Mammary epithelial cell (primary cell): ENCODE measurements at regions of chr22 and their contacts with region 1.

Region 1: DNA sequence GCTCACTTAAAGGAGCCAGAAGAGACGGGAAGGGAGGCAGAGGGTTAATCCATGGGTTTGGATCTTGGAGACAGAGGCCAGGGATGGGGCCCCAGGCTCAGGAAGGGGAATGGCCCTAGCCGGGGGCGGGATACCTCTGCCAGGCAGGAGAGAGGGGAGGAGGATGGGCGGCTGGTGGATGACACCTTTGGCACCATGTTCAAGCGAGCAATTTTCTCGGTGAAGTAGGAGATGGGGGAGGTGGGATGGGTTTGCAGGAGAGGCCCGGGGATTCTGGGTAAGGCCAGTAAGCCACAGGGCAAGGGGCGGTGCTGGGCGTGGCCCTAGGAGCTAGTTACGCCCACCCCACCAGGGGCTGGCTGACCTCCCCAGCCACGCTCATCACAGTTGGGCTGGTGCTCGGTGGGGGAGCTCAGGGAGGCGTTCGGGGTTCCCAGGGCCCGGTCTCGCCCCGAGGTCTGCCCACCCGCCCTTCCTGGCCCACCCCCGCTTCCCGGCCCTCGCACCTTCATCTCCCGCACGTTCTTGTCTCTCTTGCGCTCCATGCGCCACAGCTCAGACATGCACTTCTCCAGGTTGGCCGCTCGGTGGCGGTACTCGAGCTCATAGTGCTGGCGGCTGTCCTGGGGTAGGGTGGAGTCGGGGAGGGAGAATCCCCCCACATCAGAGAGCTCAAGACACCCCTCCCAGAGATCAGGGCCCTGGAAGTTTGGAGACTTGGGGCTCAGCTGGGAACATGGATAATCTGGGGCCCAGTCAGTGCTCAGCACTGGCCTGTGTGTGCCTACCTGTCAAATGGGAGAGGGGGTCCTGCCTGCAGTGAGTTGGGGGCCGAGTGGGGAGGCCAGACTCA is 12.7 kb downstream of the BAIAP2L2 start:
- DNase-seq: no peak
- H3K4me3 ChIP-seq: no peak overlapping the region
- H3K27ac ChIP-seq: no peak overlapping the region
- H3K4me1 ChIP-seq: no peaks in the 10 kb centered on the region
- H3K27me3 ChIP-seq: no peaks in the 10 kb centered on the region
- CTCF ChIP-seq: peak; percentile 4 to 26

Region 2: GRCh38 chr22:37633625-37634416 is 464.0 kb before region 1 on chr22:
- CTCF ChIA-PET with region 1: no interaction called
- dilution Hi-C with region 1: no loop called
- in situ Hi-C with region 1: no loop called
- intact Hi-C with region 1: no loop called
- DNase-seq: no peak
- H3K4me3 ChIP-seq: no peak overlapping the region
- H3K27ac ChIP-seq: no peak overlapping the region
- H3K4me1 ChIP-seq: peaks cover 11% of the 10 kb centered on the region
- H3K27me3 ChIP-seq: no peaks in the 10 kb centered on the region
- CTCF ChIP-seq: no peak

Region 3: GRCh38 chr22:38051900-38052862 is 45.6 kb before region 1 on chr22:
- CTCF ChIA-PET with region 1: no interaction called
- dilution Hi-C with region 1: no loop called
- in situ Hi-C with region 1: no loop called
- intact Hi-C with region 1: no loop called
- DNase-seq: peak; percentile 50
- H3K4me3 ChIP-seq: no peak overlapping the region
- H3K27ac ChIP-seq: no peak overlapping the region
- H3K4me1 ChIP-seq: peaks cover 6% of the 10 kb centered on the region
- H3K27me3 ChIP-seq: no peaks in the 10 kb centered on the region
- CTCF ChIP-seq: peak; percentile 73 to 83

Region 4: DNA sequence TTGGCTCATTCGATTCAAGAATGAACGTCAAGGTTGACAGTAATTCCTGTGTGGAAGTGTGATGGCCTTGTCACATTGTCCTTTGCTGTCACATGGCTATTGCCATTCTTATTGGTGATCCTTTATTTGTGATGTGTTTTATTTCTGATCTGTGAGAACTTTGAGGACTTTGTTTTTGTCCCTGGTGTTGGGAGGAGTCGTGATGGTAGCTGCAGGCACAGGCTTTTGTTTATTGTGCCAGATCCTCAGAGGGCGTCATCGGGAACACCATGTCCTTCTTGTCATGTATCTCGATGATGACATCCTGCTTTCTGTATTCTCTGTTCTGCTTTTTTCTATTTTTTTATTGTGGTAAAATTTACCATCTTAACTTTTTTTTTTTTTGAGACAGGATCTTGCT is 35.0 kb before region 1 on chr22:
- CTCF ChIA-PET with region 1: no interaction called
- dilution Hi-C with region 1: no loop called
- in situ Hi-C with region 1: no loop called
- intact Hi-C with region 1: no loop called
- DNase-seq: no peak
- H3K4me3 ChIP-seq: no peak overlapping the region
- H3K27ac ChIP-seq: no peak overlapping the region
- H3K4me1 ChIP-seq: no peaks in the 10 kb centered on the region
- H3K27me3 ChIP-seq: no peaks in the 10 kb centered on the region
- CTCF ChIP-seq: no peak

Region 5: DNA sequence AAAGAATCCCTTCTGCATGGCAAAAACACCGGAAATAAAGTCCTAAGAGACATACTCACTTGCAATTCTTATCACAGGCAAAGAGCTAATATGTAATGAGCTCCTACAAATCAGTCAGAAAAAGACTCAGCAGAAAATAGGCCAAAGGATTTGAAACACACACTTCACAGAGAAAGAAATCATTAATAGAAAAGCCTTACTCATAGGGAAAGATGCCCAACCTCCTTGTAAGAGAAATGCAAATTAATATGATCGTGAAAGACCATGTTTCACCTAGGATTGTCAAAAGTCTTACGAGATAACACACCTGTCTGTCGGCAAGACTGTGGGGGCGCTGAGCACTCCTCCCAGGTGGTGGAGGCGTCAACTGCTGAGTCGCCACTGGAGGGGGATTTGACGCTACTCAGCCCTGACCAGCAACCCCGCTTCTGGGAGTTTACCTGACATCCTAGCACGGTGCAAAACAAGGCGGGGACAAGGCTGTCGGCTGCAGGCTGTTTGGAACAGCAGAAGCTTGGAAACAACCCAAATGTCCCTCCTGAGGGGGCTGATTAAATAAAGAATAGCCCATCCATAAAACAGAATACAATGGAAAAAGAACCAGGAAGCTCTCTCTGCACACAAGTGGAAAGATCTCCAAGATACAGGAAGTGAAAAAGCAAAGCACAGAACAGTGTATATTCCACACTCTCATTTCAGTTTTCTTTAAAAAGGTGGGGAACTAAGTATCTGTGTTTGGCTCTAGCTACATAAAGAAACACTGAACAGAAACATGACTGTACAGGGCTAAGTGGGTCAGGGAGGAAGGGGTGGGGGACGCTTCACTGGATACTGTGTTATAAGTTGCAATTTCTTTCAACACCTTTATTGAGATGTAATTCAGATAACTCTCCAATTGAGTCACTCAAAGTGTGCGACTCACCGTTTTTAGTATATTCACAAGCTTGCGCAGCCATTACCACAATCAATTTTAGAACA is 208.0 kb after region 1 on chr22:
- CTCF ChIA-PET with region 1: no interaction called
- dilution Hi-C with region 1: loop called (anchors 10 kb)
- in situ Hi-C with region 1: no loop called
- intact Hi-C with region 1: no loop called
- DNase-seq: peak; percentile 63
- H3K4me3 ChIP-seq: no peak overlapping the region
- H3K27ac ChIP-seq: peak overlapping the region; percentile 85
- H3K4me1 ChIP-seq: peaks cover 53% of the 10 kb centered on the region
- H3K27me3 ChIP-seq: no peaks in the 10 kb centered on the region
- CTCF ChIP-seq: peak in 1 of 2 donors; percentile 27